ENCODE measurements at regions of chr12 and their contacts with region 1.

Region 1: DNA sequence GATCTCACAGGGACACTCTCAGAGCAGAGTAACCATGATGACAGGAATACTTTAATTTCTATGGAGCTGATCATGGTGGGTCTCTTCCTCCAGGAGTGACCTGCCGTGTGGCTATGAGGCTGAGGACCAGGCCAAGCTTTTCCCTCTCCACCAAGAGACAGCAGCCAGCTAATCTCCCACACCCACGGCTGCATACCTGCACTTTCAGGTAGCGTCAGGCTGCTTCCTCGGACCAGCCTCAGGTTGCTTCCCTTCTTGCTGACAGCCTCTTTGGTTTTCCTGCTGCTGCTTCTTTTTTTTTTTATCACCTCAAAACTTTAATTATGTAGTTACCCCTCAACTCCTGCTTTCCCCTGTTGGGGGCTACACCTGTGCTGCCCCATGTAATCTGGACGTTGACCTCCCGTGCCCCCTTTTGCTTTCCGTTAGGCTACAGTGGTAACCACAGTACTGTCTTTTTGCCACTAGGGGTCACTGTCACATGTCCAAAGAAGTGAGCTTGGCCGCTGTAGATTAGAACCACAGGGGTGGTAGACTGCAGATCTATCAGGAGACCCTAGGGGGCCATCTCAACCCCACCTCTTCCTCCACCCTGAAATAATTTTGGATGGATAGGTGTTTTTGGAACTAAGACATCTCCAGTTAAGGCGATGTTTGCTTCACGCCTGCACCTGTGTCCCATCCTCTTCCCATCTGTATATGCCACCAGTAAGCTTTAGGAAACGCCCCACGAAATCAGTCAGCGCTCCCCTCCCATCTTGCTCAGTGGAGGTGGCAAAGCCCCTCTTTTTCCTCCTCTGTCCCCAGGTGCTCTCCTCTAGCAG is 7.8 kb upstream of the PIP4K2C start:
- DNase-seq: peak; percentile 73
- H3K4me3 Mint-ChIP-seq: no peak overlapping the region
- H3K27ac Mint-ChIP-seq: no peak overlapping the region
- H3K4me1 Mint-ChIP-seq: no peaks in the 10 kb centered on the region
- H3K27me3 Mint-ChIP-seq: peaks cover 2% of the 10 kb centered on the region

Region 2: GRCh38 chr12:56288456-56289387 is 1294.5 kb before region 1 on chr12:
- CTCF ChIA-PET with region 1: no interaction called
- POLR2A ChIA-PET with region 1: no interaction called
- intact Hi-C with region 1: no loop called
- DNase-seq: no peak
- H3K4me3 Mint-ChIP-seq: no peak overlapping the region
- H3K27ac Mint-ChIP-seq: no peak overlapping the region
- H3K4me1 Mint-ChIP-seq: peaks cover 30% of the 10 kb centered on the region
- H3K27me3 Mint-ChIP-seq: no peaks in the 10 kb centered on the region

Region 3: GRCh38 chr12:57563358-57563757 is 19.9 kb before region 1 on chr12:
- CTCF ChIA-PET with region 1: interaction called, 14 read pairs
- POLR2A ChIA-PET with region 1: no interaction called
- intact Hi-C with region 1: no loop called
- DNase-seq: no peak
- H3K4me3 Mint-ChIP-seq: no peak overlapping the region
- H3K27ac Mint-ChIP-seq: no peak overlapping the region
- H3K4me1 Mint-ChIP-seq: no peaks in the 10 kb centered on the region
- H3K27me3 Mint-ChIP-seq: no peaks in the 10 kb centered on the region

Region 4: GRCh38 chr12:57616383-57617101 is 33.3 kb after region 1 on chr12:
- CTCF ChIA-PET with region 1: interaction called, 112 read pairs
- POLR2A ChIA-PET with region 1: interaction called, 3 read pairs
- intact Hi-C with region 1: loop called (anchors 1 kb)
- DNase-seq: no peak
- H3K4me3 Mint-ChIP-seq: no peak overlapping the region
- H3K27ac Mint-ChIP-seq: no peak overlapping the region
- H3K4me1 Mint-ChIP-seq: peaks cover 16% of the 10 kb centered on the region
- H3K27me3 Mint-ChIP-seq: peaks cover 60% of the 10 kb centered on the region

Region 5: DNA sequence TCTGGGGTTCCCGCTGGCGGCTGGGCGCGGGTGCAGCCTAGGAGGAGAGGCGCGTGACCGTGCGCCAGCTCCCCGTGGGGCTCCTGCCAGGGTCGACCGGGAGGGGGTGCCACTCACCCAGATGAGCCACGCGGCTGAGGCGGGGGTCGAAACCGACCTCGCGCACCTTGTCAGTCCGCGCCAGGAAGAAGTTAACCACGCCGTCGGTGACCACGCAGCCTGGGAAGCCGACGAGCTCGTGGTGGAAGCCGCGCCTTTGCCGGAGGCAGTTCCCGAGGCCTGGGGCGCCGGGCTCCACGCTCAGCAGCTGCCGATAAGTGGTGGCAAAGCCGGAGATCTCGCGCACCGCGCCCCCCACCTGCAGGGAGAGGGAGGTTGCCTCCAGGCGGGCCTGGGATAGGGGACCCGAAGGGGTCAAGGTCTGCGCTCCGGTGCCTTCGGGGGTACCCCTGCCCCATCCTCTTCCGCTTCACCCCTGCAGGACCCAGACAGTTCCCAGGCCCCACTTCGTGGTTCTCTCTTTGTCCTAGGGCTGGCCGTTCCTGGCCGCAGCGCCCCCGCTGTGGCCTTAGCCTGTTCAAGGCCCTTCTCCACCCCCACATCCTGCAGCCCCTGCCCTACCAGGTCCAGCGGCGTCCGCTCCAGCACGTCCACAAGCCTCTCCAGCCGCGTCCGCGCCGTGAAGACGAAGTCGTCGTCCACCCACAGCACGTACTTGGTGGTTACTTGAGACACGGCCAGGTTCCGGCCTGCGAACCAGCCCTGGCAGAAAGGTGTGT is 44.5 kb after region 1 on chr12:
- CTCF ChIA-PET with region 1: interaction called, 112 read pairs
- POLR2A ChIA-PET with region 1: no interaction called
- intact Hi-C with region 1: no loop called
- DNase-seq: peak; percentile 61
- H3K4me3 Mint-ChIP-seq: peak overlapping the region; percentile 17
- H3K27ac Mint-ChIP-seq: no peak overlapping the region
- H3K4me1 Mint-ChIP-seq: peaks cover 12% of the 10 kb centered on the region
- H3K27me3 Mint-ChIP-seq: peaks cover 77% of the 10 kb centered on the region

Region 6: GRCh38 chr12:57641699-57642442 is 58.7 kb after region 1 on chr12:
- CTCF ChIA-PET with region 1: interaction called, 26 read pairs
- POLR2A ChIA-PET with region 1: no interaction called
- intact Hi-C with region 1: no loop called
- DNase-seq: no peak
- H3K4me3 Mint-ChIP-seq: no peak overlapping the region
- H3K27ac Mint-ChIP-seq: no peak overlapping the region
- H3K4me1 Mint-ChIP-seq: no peaks in the 10 kb centered on the region
- H3K27me3 Mint-ChIP-seq: peaks cover 19% of the 10 kb centered on the region

Region 7: DNA sequence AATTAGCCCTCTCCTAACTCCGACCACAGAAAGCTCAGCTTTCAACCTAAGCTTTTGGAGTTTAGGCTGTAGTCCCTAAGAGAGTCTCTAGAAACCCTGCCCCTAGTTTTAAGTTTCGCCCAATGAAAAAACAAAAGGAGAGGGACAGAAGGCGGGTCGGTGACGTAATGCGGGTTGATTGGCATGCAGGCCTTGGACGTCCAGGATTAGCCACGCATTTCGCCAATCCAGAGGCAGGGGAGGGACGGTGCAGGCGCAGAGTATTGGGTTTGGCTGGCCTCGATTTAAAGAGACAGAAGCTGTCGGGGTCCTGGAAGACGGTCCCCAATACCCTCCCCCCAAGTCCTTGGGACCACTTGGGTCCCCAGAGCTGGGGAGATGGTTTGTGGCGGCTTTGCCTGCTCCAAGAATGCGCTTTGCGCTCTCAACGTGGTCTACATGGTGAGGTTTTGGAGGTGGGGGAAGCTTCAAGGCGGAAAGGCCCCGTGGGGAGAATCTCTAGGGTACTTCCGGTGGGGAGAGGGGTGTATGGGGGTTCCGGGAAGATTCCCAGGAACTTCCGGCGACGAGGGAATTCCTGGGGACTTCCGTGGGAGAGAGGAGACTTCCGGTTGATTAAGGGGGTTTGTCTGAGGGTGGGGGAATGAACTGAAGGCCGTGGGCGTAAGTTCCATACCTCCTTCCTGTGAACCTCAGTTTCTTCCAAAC is 161.7 kb after region 1 on chr12 and contains the start of gene TSPAN31:
- CTCF ChIA-PET with region 1: interaction called, 16 read pairs
- POLR2A ChIA-PET with region 1: no interaction called
- intact Hi-C with region 1: loop called (anchors 1 kb)
- DNase-seq: peak; percentile 98
- H3K4me3 Mint-ChIP-seq: peak within 1 kb of the TSS; percentile 93
- H3K27ac Mint-ChIP-seq: peak within 1 kb of the TSS; percentile 88
- H3K4me1 Mint-ChIP-seq: peaks cover 50% of the 10 kb centered on the region
- H3K27me3 Mint-ChIP-seq: no peaks in the 10 kb centered on the region
- total RNA-seq, gene TSPAN31: 11.7 to 15.0 TPM